Mammary epithelial cell (primary cell): ENCODE measurements at regions of chr7 and their contacts with region 1.

Region 1: DNA sequence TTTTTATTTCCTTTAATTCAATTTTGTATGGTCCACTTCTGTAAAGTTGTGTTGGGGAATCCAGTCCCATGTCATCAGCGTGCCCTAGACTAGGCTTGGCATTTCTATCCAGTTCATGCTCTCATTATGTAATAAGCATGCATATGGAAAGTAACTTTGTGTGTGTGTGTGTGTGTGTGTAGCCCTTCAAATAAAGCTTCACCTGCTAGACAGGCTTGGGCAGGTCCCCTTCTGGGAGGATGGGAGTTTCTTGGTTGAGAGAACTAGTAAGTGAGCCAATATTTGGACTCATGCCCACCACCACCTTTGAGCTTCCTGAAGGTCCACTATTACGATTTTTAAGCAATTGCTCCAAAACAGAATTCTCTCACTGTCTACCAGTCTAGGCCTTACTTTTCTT is 6.9 kb downstream of the BZW2 start:
- DNase-seq: peak; percentile 91
- H3K4me3 ChIP-seq: no peak overlapping the region
- H3K27ac ChIP-seq: peak overlapping the region; percentile 10
- H3K4me1 ChIP-seq: peaks cover 50% of the 10 kb centered on the region
- H3K27me3 ChIP-seq: no peaks in the 10 kb centered on the region
- CTCF ChIP-seq: no peak

Region 2: DNA sequence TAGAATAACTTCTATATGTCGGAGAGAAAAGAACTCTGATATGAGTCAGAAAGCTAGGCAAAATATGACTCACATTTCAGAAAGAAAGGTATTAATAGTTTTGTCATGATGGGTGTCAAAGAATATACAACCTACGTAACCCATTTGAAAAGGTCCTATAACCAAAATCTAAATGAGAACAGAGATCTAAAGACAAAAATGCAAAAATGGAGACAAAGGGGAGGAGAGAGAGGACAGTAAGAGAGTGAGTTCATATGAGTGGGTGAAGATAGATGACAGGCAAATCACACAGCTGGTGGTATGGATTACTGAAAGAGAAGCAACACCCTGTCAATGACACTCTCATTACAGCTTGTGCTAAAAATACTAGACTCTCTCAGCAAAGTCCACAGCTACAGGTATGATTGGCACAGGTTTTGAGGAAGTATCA is 32.9 kb before region 1 on chr7:
- CTCF ChIA-PET with region 1: no interaction called
- dilution Hi-C with region 1: no loop called
- in situ Hi-C with region 1: no loop called
- intact Hi-C with region 1: no loop called
- DNase-seq: no peak
- H3K4me3 ChIP-seq: no peak overlapping the region
- H3K27ac ChIP-seq: no peak overlapping the region
- H3K4me1 ChIP-seq: no peaks in the 10 kb centered on the region
- H3K27me3 ChIP-seq: no peaks in the 10 kb centered on the region
- CTCF ChIP-seq: no peak

Region 3: GRCh38 chr7:16753102-16753931 is 100.4 kb after region 1 on chr7 and contains the start of gene TSPAN13:
- CTCF ChIA-PET with region 1: no interaction called
- dilution Hi-C with region 1: loop called (anchors 5 kb)
- in situ Hi-C with region 1: no loop called
- intact Hi-C with region 1: loop called (anchors 5 kb)
- DNase-seq: peak; percentile 98
- H3K4me3 ChIP-seq: peak within 1 kb of the TSS; percentile 53 to 88 (median 66)
- H3K27ac ChIP-seq: peak within 1 kb of the TSS; percentile 43
- H3K4me1 ChIP-seq: peaks cover 11% of the 10 kb centered on the region
- H3K27me3 ChIP-seq: no peaks in the 10 kb centered on the region
- CTCF ChIP-seq: no peak
- total RNA-seq, gene TSPAN13: 15.3 to 15.7 TPM